Common myeloid progenitor, CD34-positive (primary cell): ENCODE measurements at regions of chr19 and their contacts with region 1.

Region 1: DNA sequence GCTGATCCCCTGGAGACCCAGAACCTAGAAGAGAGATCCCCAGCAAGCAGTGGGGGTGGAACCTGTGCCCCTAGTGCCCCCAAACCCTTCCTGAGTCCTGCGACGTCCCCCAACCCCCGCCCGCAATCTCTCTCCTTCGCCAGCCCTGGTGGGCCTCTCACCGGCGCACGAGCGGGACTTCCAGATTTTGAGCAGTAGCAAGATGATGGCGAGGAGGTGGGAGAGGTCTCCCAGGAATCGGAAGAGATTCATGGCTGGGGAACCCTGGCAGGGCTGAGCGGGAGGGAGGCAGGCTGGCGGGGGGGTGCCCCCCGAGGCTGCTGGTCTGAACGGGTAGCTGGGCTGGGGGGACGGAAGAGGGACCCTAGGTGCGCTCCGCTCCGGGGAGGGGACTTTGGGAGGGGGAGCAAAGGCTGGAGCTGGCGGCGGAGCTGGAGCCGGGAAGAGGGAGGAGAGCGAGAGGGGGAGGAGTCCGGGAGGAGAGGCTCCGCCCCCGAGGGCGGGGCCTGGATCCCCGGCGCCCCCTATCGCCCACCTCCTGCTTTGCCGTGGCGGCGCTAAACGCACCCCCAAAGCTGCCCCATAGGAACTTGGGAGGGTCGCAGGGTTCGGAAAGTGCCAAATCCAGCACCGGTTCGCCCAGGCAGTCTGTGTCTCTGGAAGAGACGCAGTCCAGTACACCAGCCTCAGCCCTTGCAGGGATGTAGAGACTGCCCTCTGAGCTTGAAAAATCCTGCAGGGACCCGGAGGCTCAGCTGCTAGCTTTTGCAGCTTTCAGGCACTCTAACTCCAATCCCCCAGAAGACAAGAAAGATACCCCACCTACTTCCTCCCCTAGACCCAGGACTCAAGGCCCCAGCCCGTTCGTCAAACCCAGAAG is at the start of gene KDELR1:
- DNase-seq: peak; percentile 59 to 70 (median 65)
- H3K4me3 ChIP-seq: peak within 1 kb of the TSS; percentile 77 to 96 (median 86)
- H3K27ac ChIP-seq: peak within 1 kb of the TSS; percentile 92 to 97
- H3K4me1 ChIP-seq: peaks cover 0 to 35% (median 27%) of the 10 kb centered on the region in 4 experiments
- H3K27me3 ChIP-seq: peaks cover 0 to 40% (median 17%) of the 10 kb centered on the region in 5 experiments

Region 2: GRCh38 chr19:48363810-48364563 is 27.4 kb before region 1 on chr19 and contains the starts of genes SYNGR4 and TMEM143:
- CTCF ChIA-PET with region 1: interaction called, 14 read pairs
- POLR2A ChIA-PET with region 1: no interaction called
- DNase-seq: peak; percentile 100
- H3K4me3 ChIP-seq: peak within 1 kb of the TSS; percentile 28 to 85 (median 75)
- H3K27ac ChIP-seq: peak within 1 kb of the TSS; percentile 66 to 92
- H3K4me1 ChIP-seq: peaks cover 0 to 17% (median 13%) of the 10 kb centered on the region in 4 experiments
- H3K27me3 ChIP-seq: no peaks in the 10 kb centered on the region